Activated CD4-positive, alpha-beta memory T cell treated with anti-CD3 and anti-CD28 coated beads for 36 hours (primary cell): ENCODE measurements at regions of chr12 and their contacts with region 1.

Region 1: DNA sequence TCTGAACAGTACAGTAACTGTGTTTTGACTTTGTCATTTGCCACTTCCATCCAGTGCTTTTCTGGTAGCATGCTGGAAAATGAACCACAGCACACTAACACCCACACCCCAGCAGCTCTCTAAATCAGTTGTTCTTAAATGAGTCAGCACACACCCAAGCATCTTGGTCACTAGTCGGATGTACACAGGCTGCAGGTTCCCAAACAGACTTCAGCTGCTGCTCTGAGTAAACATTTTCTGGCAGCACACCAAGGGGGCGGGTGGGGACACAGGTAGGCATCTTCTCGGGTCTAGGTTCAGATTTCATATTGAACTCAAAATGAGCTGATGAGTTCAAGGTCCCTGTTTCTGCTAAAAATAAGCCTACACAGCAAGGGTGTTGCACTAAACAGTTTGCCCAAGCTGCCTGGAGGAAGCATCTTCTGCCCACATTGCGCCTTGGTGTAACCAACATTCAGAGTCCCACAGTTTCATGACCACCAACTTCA is 39.8 kb downstream of the IFNG start:
- DNase-seq: peak; percentile 89
- H3K4me3 Mint-ChIP-seq: peak overlapping the region; percentile 27
- H3K27ac Mint-ChIP-seq: peak overlapping the region; percentile 74
- H3K4me1 Mint-ChIP-seq: peaks cover 31% of the 10 kb centered on the region
- H3K27me3 Mint-ChIP-seq: peaks cover 3% of the 10 kb centered on the region

Region 2: DNA sequence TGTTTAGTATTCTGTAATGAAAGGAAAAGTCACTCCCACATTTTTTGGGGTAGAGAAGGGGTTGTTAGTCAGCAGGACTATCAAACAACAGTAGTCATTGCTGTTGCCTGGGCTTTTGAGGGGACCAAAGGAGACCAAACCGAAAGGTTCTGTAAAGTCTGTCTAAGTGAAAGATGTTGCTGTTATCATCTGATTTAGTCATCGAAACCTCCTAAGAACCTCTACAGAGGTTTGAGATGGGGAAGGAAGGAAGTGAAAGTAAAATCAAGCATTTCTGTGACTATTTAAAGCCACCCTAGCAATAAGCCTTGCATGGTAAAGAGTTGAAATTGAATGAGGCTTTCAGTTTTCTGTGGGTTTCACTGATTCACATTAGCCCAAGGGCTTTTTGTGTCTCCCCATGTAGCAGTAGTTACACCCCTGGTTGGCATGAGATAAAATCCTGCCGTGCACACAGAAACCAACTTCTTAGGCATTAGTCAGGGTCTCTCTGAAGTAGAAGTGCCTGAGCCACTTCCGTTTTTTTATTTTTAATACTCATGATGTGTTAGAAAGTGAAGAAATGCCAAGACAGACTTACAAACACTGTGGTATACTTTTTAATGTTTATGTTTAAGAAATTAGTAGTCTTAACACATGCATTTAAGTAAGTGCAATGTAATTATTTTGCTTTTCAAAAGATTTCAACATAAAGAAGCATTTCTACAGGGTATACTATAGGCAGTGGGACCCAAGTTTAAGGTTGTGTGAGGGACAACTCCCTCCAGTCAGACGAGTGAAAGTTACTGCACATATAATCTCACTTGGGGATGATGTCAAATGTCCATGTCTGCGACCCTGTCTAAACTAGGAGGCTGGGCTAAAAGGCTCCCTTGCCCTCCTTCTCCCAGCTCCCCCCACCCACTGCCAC is 420.8 kb before region 1 on chr12:
- CTCF ChIA-PET with region 1: no interaction called
- POLR2A ChIA-PET with region 1: no interaction called
- intact Hi-C with region 1: loop called (anchors 1 kb)
- DNase-seq: peak; percentile 77
- H3K4me3 Mint-ChIP-seq: peak overlapping the region; percentile 13
- H3K27ac Mint-ChIP-seq: peak overlapping the region; percentile 46
- H3K4me1 Mint-ChIP-seq: peaks cover 49% of the 10 kb centered on the region
- H3K27me3 Mint-ChIP-seq: peaks cover 8% of the 10 kb centered on the region

Region 3: GRCh38 chr12:68080577-68080976 is 39.2 kb before region 1 on chr12:
- CTCF ChIA-PET with region 1: interaction called, 5 read pairs
- POLR2A ChIA-PET with region 1: interaction called, 5 read pairs
- intact Hi-C with region 1: loop called (anchors 2 kb)
- DNase-seq: peak; percentile 44
- H3K4me3 Mint-ChIP-seq: no peak overlapping the region
- H3K27ac Mint-ChIP-seq: peak overlapping the region; percentile 43
- H3K4me1 Mint-ChIP-seq: peaks cover 17% of the 10 kb centered on the region
- H3K27me3 Mint-ChIP-seq: no peaks in the 10 kb centered on the region

Region 4: DNA sequence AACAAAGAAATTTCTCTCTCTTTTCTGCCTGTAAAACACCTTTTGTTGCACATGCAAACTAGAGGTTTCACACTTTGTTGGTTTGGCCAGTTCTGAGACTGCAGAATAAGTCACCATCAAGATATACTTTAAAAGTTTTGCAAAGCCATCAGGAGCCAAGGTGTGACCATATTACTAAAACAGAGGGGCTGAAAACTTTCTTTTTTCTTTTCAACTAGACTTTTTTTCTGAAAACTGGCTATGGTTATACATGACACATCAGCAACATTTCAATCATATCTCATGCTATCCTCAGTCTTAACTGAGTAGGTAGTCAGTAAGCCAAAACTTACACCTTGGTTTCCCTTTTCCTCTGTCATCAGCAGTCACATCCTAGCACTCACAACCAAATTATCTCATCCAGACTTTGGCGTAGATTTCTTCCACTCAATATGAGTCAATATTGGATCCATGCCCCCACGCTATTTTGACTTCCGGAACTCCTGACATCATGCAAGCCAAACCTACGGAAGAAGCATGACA is 43.9 kb after region 1 on chr12:
- CTCF ChIA-PET with region 1: interaction called, 189 read pairs
- POLR2A ChIA-PET with region 1: interaction called, 58 read pairs
- intact Hi-C with region 1: loop called (anchors 1 kb)
- DNase-seq: peak; percentile 56
- H3K4me3 Mint-ChIP-seq: peak overlapping the region; percentile 20
- H3K27ac Mint-ChIP-seq: peak overlapping the region; percentile 57
- H3K4me1 Mint-ChIP-seq: peaks cover 41% of the 10 kb centered on the region
- H3K27me3 Mint-ChIP-seq: no peaks in the 10 kb centered on the region

Region 5: GRCh38 chr12:68290126-68290525 is 170.4 kb after region 1 on chr12:
- CTCF ChIA-PET with region 1: no interaction called
- POLR2A ChIA-PET with region 1: no interaction called
- intact Hi-C with region 1: loop called (anchors 1 kb)
- DNase-seq: peak; percentile 58
- H3K4me3 Mint-ChIP-seq: no peak overlapping the region
- H3K27ac Mint-ChIP-seq: peak overlapping the region; percentile 59
- H3K4me1 Mint-ChIP-seq: peaks cover 47% of the 10 kb centered on the region
- H3K27me3 Mint-ChIP-seq: peaks cover 23% of the 10 kb centered on the region

Region 6: GRCh38 chr12:68482660-68483059 is 362.9 kb after region 1 on chr12:
- CTCF ChIA-PET with region 1: no interaction called
- POLR2A ChIA-PET with region 1: no interaction called
- intact Hi-C with region 1: loop called (anchors 1 kb)
- DNase-seq: peak; percentile 49
- H3K4me3 Mint-ChIP-seq: no peak overlapping the region
- H3K27ac Mint-ChIP-seq: peak overlapping the region; percentile 94
- H3K4me1 Mint-ChIP-seq: peaks cover 50% of the 10 kb centered on the region
- H3K27me3 Mint-ChIP-seq: no peaks in the 10 kb centered on the region